PC-3 (cell line): ENCODE measurements at regions of chr17 and their contacts with region 1.

Region 1: DNA sequence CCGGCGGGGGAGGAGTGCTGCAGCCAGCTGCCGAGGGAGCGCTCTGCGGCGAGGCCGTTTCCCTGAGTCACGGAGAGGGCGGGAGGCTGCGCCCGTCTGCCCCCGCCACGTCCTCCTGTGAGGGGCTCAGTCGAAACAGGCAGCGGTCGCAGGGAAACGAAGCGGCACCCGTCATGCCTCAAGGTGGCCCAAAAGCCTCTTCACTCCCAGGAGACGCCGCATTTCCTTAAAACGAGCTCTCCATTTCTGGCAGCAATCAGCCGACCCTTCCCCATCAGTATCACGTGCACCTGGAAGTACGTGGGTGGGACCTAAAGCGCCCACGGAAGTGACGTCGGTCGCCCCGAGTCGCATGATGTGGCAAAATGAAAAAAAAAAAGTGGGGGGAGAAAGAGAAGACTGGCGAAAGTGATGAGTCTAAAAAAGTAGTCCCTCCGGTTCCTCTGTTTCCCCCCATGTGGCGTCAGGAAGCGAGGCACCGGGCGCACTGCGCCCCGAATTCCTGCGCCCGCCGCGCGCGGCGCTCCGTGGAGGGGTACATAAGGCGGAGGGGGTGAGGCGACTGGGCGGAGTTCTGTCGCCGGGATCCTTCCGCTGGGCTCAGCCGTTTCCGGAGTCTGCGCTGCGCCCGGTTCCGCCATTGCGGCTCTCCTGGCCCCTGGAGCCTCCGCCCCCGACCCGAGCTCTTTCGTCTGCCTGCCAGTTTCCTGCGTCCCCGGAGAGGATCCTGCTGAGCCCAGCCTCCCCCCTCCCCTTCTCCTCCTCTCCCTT is at the start of gene CLTC:
- DNase-seq: peak; percentile 95
- ATAC-seq: peak; percentile 86
- H3K4me3 ChIP-seq: peak within 1 kb of the TSS; percentile 97
- H3K27ac ChIP-seq: peak within 1 kb of the TSS; percentile 97
- H3K4me1 ChIP-seq: peaks cover 44% of the 10 kb centered on the region
- H3K27me3 ChIP-seq: no peaks in the 10 kb centered on the region
- CTCF ChIP-seq: no peak
- total RNA-seq, gene CLTC: 241 and 269 TPM in 2 replicates

Region 2: DNA sequence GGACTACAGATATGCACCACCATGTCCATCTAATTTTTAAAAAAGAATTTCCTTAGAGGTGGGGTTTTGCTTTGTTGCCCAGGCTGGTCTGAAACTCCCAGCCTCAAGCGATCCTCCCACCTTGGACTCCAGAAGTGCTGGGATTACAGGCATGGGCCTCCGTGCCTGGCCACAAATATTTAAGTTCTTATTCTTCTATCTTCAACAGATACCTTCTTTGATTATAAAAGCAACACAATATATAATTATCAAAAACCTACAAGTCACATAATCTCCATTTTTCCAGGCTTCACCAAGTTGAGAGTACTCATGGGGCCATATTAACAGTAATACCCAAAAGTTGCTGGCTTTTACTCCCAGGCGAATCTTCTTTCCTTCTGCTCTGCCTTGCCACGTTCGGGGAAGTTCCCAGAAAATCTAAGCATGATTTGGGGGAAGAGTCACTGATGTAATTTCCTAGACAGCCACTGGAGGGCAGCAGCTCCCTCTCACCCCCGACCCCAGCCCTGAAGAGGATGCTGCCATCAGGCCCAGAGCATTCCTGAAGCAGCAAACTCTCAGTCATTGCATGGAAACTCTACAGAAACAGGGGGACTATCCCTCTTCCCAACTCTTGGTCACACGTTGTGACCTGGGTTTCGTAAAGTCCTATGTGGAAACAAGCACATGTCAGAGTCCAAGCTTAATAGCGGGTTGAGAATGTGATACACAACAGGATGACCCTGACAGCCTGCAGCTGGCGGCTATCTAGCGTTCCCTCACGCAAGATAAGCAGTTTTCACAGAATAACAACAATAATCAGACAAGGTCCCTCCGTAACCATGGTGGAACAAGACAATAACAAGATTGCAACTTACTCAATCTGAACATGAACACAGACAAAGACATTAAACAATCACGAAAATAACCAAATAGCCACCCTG is 98.0 kb before region 1 on chr17:
- CTCF ChIA-PET with region 1: no interaction called
- POLR2A ChIA-PET with region 1: no interaction called
- intact Hi-C with region 1: loop called (anchors 10 kb)
- DNase-seq: peak; percentile 81
- ATAC-seq: peak; percentile 97
- H3K4me3 ChIP-seq: no peak overlapping the region
- H3K27ac ChIP-seq: no peak overlapping the region
- H3K4me1 ChIP-seq: peaks cover 4% of the 10 kb centered on the region; the same call in 1 of the 2 replicates
- H3K27me3 ChIP-seq: no peaks in the 10 kb centered on the region
- CTCF ChIP-seq: peak; percentile 95

Region 3: GRCh38 chr17:59565171-59565969 is 54.1 kb before region 1 on chr17 and contains the start of gene DHX40:
- CTCF ChIA-PET with region 1: no interaction called
- POLR2A ChIA-PET with region 1: interaction called, 3 read pairs
- intact Hi-C with region 1: loop called (anchors 1 kb)
- DNase-seq: peak; percentile 91
- ATAC-seq: peak; percentile 82
- H3K4me3 ChIP-seq: peak within 1 kb of the TSS; percentile 95
- H3K27ac ChIP-seq: no peak within 1 kb of the TSS; the same call in 1 of the 2 replicates
- H3K4me1 ChIP-seq: peaks cover 8% of the 10 kb centered on the region
- H3K27me3 ChIP-seq: no peaks in the 10 kb centered on the region
- CTCF ChIP-seq: no peak
- total RNA-seq, gene DHX40: 36.6 and 38.9 TPM in 2 replicates

Region 4: GRCh38 chr17:59668816-59669215 is 49.3 kb after region 1 on chr17:
- CTCF ChIA-PET with region 1: interaction called, 16 read pairs
- POLR2A ChIA-PET with region 1: interaction called, 11 read pairs
- intact Hi-C with region 1: loop called (anchors 1 kb)
- DNase-seq: peak; percentile 93
- ATAC-seq: peak; percentile 68
- H3K4me3 ChIP-seq: peak overlapping the region; percentile 37
- H3K27ac ChIP-seq: peak overlapping the region; percentile 44
- H3K4me1 ChIP-seq: peaks cover 57% of the 10 kb centered on the region
- H3K27me3 ChIP-seq: no peaks in the 10 kb centered on the region
- CTCF ChIP-seq: no peak

Region 5: DNA sequence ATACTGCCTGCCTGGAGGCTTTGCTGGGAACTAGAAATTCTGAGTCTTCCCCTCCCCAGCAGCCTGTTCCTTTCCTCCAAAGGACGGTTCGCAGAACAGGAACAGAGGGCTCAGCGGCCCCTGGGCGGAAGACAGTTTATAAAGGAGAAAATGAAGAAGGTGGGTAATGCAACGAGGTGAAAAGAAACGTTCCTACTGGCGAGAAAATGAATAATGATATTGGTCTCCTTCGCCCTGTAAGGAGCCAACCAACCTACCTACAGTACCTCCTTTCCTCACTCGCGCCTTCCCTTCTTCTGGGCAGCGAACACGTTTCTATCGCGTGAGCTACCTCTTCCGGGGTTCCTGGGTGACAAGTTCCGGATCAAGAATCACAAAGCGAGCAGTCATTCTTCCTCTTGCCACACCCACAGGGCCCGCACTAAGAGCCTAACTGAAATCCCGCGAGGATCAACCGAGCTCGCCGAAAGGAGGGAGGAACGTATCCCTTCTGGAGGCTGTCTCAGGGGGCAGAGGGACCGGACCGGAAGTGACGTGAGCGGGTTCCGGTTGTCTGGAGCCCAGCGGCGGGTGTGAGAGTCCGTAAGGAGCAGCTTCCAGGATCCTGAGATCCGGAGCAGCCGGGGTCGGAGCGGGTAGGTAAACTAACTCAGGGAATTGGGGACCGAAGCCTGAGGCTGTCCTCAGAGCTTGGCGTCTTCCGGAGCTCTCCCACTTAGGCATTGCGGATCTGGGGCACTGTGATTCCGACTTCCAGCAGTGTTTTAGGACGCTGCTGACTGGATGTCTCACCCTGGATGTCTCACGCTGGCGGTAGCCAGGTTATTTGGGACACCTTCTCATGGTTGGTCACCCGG is 87.9 kb after region 1 on chr17 and contains the starts of genes PTRH2 and VMP1:
- CTCF ChIA-PET with region 1: no interaction called
- POLR2A ChIA-PET with region 1: interaction called, 7 read pairs
- intact Hi-C with region 1: loop called (anchors 1 kb)
- DNase-seq: peak; percentile 100
- ATAC-seq: peak; percentile 96
- H3K4me3 ChIP-seq: peak within 1 kb of the TSS; percentile 76
- H3K27ac ChIP-seq: peak within 1 kb of the TSS; percentile 83
- H3K4me1 ChIP-seq: peaks cover 27% of the 10 kb centered on the region
- H3K27me3 ChIP-seq: no peaks in the 10 kb centered on the region
- CTCF ChIP-seq: no peak
- total RNA-seq, gene PTRH2: 69.8 and 82.1 TPM in 2 replicates
- total RNA-seq, gene VMP1: 237 and 277 TPM in 2 replicates

Region 6: DNA sequence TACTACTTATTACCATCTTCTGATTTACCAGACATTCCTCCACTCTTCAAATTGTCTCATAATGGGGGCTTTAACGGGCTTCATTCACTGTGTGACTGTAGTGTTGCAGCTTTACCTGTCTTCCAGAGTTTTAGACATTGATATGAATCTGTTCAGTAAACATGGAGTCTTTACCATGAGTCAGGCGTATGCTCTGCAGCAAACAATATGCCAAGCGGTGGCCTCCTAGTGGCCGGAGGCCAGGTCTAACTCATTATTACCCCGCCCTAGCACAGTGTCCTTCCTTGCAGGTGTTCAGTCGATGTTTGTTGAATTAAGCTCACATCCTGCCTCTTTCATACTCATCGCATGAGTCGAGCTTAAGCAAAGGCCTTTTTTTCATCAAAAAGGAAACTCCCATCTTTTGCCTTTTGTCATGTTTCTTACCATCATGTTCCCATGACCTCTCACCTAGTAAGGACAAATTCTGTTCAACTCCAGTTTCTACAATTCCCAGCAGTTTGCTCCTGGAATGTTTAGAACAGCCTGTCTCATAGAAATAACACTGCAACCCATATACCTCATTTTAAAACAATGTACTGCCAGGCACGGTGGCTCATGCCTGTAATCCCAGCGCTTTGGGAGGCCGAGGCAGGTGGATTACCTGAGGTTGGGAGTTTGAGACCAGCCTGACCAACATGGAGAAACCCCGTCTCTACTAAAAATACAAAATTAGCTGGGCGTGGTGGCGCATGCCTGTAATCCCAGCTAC is 233.9 kb after region 1 on chr17:
- CTCF ChIA-PET with region 1: no interaction called
- POLR2A ChIA-PET with region 1: interaction called, 12 read pairs
- intact Hi-C with region 1: no loop called
- DNase-seq: peak; percentile 100
- ATAC-seq: peak; percentile 90
- H3K4me3 ChIP-seq: no peak overlapping the region
- H3K27ac ChIP-seq: peak overlapping the region; percentile 92
- H3K4me1 ChIP-seq: peaks cover 62% of the 10 kb centered on the region
- H3K27me3 ChIP-seq: no peaks in the 10 kb centered on the region
- CTCF ChIP-seq: peak; percentile 90